Left ventricle myocardium inferior (tissue), 1 donor: ENCODE measurements at regions of chr18 and their contacts with region 1.

Region 1: DNA sequence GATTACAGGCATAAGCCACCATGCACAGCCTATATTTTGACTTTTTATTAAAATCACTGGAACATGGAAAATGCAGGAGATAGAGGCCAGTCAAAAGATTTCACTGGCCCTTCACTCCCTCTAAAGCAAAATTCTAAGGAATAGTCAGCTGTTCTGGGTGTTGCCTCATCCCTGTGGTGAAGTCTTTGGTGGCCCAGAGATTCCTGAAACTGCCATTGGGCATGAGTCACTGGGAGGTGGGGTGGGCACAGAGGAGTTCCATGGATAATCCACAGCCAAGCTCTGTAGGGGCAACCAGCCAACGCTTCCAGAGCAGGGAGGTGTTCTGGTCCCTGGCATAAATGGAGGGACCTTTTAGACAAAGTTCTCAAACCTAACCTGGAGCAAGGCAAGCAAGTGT is 89.7 kb upstream of the TTC39C start:
- DNase-seq: no peak
- H3K4me3 ChIP-seq: no peak overlapping the region
- H3K27ac ChIP-seq: no peak overlapping the region
- H3K4me1 ChIP-seq: no peaks in the 10 kb centered on the region
- H3K27me3 ChIP-seq: no peaks in the 10 kb centered on the region
- CTCF ChIP-seq: no peak

Region 2: GRCh38 chr18:23812546-23813440 is 112.0 kb before region 1 on chr18:
- intact Hi-C with region 1: loop called (anchors 10 kb)
- DNase-seq: no peak
- H3K4me3 ChIP-seq: no peak overlapping the region
- H3K27ac ChIP-seq: no peak overlapping the region
- H3K4me1 ChIP-seq: peaks cover 12% of the 10 kb centered on the region
- H3K27me3 ChIP-seq: no peaks in the 10 kb centered on the region
- CTCF ChIP-seq: peak; percentile 73